ENCODE measurements at regions of chr4 and their contacts with region 1.

Region 1: GRCh38 chr4:13627606-13628301 is at the start of gene BOD1L1:
- DNase-seq: peak; percentile 87

Region 2: GRCh38 chr4:13654158-13654797 is 26.5 kb after region 1 on chr4:
- CTCF ChIA-PET with region 1: no interaction called
- POLR2A ChIA-PET with region 1: interaction called, 17 read pairs
- DNase-seq: peak; percentile 79